ENCODE measurements at regions of chr5 and their contacts with region 1.

Region 1: GRCh38 chr5:173689737-173690360 is 73.4 kb upstream of the BOD1 start:
- DNase-seq: no peak
- ATAC-seq: peak; percentile 78
- H3K4me3 ChIP-seq: no peak overlapping the region
- H3K27ac ChIP-seq: peak overlapping the region; percentile 51
- H3K4me1 ChIP-seq: peaks cover 40% of the 10 kb centered on the region
- H3K27me3 ChIP-seq: no peaks in the 10 kb centered on the region
- CTCF ChIP-seq: peak in 2 of 3 experiments; percentile 26 to 33; a peak in 2 of 6 replicates
- EP300 ChIP-seq: no peak
- POLR2A ChIP-seq: no peak; the same call in 1 of the 2 replicates
- RAD21 ChIP-seq: no peak

Region 2: GRCh38 chr5:173612948-173613347 is 76.9 kb before region 1 on chr5:
- CTCF ChIA-PET with region 1: no interaction called
- POLR2A ChIA-PET with region 1: no interaction called
- RAD21 ChIA-PET with region 1: no interaction called
- SMC1A ChIA-PET with region 1: no interaction called
- in situ Hi-C with region 1: no loop called
- intact Hi-C with region 1: no loop called
- DNase-seq: no peak
- ATAC-seq: no peak
- H3K4me3 ChIP-seq: no peak overlapping the region; the same call in 1 of the 2 replicates
- H3K27ac ChIP-seq: no peak overlapping the region
- H3K4me1 ChIP-seq: peaks cover 14% of the 10 kb centered on the region
- H3K27me3 ChIP-seq: no peaks in the 10 kb centered on the region
- CTCF ChIP-seq: no peak
- EP300 ChIP-seq: no peak
- POLR2A ChIP-seq: no peak
- RAD21 ChIP-seq: no peak

Region 3: GRCh38 chr5:173736923-173737412 is 47.1 kb after region 1 on chr5:
- CTCF ChIA-PET with region 1: no interaction called
- POLR2A ChIA-PET with region 1: interaction called, 5 read pairs
- RAD21 ChIA-PET with region 1: no interaction called
- SMC1A ChIA-PET with region 1: interaction called, 3 read pairs
- in situ Hi-C with region 1: no loop called
- intact Hi-C with region 1: loop called (anchors 5 kb)
- DNase-seq: peak; percentile 76
- ATAC-seq: peak; percentile 91
- H3K4me3 ChIP-seq: peak overlapping the region; percentile 30; the same call in 1 of the 2 replicates
- H3K27ac ChIP-seq: peak overlapping the region; percentile 76
- H3K4me1 ChIP-seq: peaks cover 63% of the 10 kb centered on the region
- H3K27me3 ChIP-seq: no peaks in the 10 kb centered on the region
- CTCF ChIP-seq: no peak
- EP300 ChIP-seq: peak; percentile 47 to 49; a peak in 1 of 4 replicates
- POLR2A ChIP-seq: peak; percentile 48; the same call in 1 of the 2 replicates
- RAD21 ChIP-seq: 0 out of 2 replicates have a peak, but pooled peaks have one; percentile 10

Region 4: DNA sequence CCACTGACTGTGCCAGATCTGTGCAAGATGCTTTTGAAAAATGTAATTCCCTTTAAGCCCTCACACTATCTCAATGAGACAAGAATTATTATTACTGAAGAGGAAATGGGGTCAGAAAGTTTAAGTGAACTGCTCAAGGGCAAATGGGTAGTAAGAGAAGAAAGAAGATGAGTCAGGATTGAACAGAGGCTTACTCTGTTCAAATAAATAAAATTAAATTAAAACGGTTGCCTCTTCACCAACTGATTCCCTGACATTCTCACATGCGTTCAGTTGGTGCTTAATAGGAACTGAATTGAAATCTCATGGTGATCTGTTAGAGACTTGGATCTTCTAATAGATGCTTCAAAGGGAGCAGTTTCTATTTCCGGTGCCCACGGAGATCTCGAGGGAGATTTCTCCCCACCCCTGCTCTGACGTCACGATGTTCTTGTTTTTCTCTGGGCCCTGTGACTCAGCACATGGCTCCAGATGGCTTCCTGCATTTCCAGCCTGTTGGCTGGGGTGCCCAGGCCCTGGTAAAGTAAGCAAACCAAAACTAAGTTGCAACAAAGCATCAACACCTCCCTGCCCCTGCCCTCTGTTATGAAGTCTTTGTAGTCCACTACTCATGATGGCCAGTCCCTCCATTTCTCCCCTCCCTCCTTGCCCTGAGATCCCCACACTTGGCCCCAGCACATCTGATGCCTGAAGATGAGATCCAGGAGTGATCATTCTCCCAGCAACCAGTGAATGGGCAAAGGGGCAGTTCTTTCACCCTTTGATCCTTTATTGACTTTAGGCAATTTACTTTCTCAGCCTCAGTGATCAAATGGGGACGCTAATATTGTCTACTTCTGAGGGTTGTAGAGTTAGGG is 92.2 kb after region 1 on chr5:
- CTCF ChIA-PET with region 1: interaction called, 3 read pairs
- POLR2A ChIA-PET with region 1: interaction called, 4 read pairs
- RAD21 ChIA-PET with region 1: no interaction called
- SMC1A ChIA-PET with region 1: interaction called, 4 read pairs
- in situ Hi-C with region 1: no loop called
- intact Hi-C with region 1: loop called (anchors 10 kb)
- DNase-seq: peak; percentile 32
- ATAC-seq: peak; percentile 21
- H3K4me3 ChIP-seq: no peak overlapping the region
- H3K27ac ChIP-seq: 0 out of 2 replicates have a peak overlapping the region, but pooled peaks have one; percentile 4
- H3K4me1 ChIP-seq: peaks cover 36% of the 10 kb centered on the region
- H3K27me3 ChIP-seq: no peaks in the 10 kb centered on the region
- CTCF ChIP-seq: no peak
- EP300 ChIP-seq: no peak
- POLR2A ChIP-seq: no peak
- RAD21 ChIP-seq: no peak